ENCODE measurements at regions of chr19 and their contacts with region 1.

Region 1: GRCh38 chr19:45643024-45643926 is 4.1 kb upstream of the EML2 start:
- DNase-seq: peak; percentile 77 to 97 (median 90)
- ATAC-seq: peak; percentile 44 to 74 (median 54)
- H3K4me3 ChIP-seq: peak overlapping the region in 1 of 4 donors; percentile 47
- H3K27ac ChIP-seq: peak overlapping the region in 3 of 4 donors; percentile 62 to 85 (median 82)
- H3K4me1 ChIP-seq: peaks cover 5 to 19% (median 8%) of the 10 kb centered on the region in 3 donors
- H3K27me3 ChIP-seq: no peaks in the 10 kb centered on the region
- CTCF ChIP-seq: peak; percentile 93 to 96 (median 94)

Region 2: DNA sequence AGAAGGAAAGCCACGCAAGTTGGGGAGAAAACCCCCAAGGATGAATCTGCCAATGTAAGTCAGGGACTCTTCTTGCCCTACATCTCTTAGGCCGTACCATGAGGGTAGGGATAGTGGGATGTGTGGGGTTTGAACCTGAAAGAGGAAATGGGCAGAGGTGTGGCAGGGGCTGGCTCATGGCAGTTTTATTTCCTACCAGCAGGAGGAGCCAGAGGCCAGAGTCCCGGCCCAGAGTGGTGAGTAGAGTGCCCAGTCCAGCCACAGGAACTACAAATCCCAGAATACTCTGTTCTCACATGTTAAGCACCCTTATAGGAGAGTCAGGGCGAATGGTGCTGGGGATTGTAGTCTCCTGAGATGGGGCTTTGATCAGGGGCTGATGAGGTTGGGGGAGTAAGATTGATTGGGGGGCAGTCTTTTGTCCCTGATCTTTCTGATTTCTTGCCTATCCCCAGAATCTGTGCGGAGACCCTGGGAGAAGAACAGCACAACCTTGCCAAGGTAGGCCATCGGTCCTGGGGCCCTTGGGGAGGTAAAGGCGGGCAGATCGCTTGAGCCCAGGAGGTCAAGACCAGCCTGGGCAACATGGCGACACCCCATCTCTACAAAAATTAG is 119.5 kb before region 1 on chr19:
- intact Hi-C with region 1: loop called in 2 of 3 experiments (anchors 5 to 10 kb)
- DNase-seq: peak; percentile 73 to 89 (median 76)
- ATAC-seq: peak; percentile 83 to 92 (median 90)
- H3K4me3 ChIP-seq: no peak overlapping the region
- H3K27ac ChIP-seq: no peak overlapping the region
- H3K4me1 ChIP-seq: peaks cover 3 to 7% (median 3%) of the 10 kb centered on the region in 3 donors
- H3K27me3 ChIP-seq: no peaks in the 10 kb centered on the region
- CTCF ChIP-seq: peak; percentile 56 to 91 (median 78)

Region 3: GRCh38 chr19:45584332-45585157 is 58.7 kb before region 1 on chr19 and contains the start of gene OPA3:
- intact Hi-C with region 1: no loop called
- DNase-seq: peak; percentile 96 to 100 (median 100)
- ATAC-seq: peak; percentile 92 to 96 (median 93)
- H3K4me3 ChIP-seq: peak within 1 kb of the TSS; percentile 32 to 75 (median 59)
- H3K27ac ChIP-seq: peak within 1 kb of the TSS; percentile 91 to 97 (median 92)
- H3K4me1 ChIP-seq: peaks cover 0 to 7% (median 3%) of the 10 kb centered on the region in 3 donors
- H3K27me3 ChIP-seq: no peaks in the 10 kb centered on the region
- CTCF ChIP-seq: no peak
- total RNA-seq, gene OPA3: 3.4 to 8.0 (median 6.0) TPM

Region 4: DNA sequence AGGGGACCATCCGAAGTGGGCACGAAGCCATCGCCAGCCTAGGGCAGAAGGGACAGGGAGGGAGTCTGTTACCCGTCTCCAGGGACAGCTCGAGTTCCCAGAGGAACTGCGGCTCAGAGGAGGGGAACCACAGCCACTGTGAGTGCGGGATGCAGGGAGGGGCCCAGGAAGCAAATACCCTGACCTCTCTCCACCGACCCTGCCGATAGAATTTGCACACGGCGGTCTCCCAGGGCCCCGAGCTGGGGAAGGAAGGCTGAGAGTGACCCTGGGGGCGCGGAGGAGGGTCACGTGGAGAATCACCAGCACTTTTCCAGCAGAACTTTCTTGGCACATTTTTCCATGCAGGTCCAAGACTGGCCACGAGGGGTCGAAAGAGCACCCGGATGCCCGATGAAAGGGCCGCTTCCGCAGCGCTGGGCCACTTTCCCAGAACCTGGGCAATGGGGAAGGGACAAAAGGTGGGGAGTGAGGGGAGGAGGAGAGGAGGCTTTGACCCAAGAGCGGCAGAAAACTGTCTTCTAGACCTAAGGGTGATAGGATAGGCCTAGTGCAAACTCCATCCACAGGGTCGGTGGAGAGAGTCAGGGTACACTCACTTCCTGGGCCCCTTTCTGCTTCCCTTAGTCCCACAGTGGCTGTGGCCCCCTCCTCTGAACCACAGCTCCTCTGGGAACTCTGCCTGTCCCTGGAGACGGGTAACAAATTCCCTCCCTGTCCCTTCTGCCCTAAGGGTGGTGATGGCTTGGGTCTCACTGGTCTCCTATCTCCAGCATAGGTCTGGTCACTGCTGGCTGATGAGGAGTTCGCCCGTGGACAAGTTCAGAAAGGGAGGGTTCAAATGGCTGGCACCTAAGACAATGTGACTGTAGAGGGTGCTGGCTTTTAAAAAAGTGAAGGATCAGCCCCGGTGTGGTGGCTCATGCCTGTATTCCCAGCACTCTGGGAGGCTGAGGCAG is 35.9 kb before region 1 on chr19:
- intact Hi-C with region 1: loop called in 1 of 3 experiments (anchors 5 kb)
- DNase-seq: peak; percentile 68 to 91 (median 86)
- ATAC-seq: peak; percentile 88 to 98 (median 96)
- H3K4me3 ChIP-seq: peak overlapping the region in 1 of 4 donors; percentile 18
- H3K27ac ChIP-seq: no peak overlapping the region
- H3K4me1 ChIP-seq: no peaks in the 10 kb centered on the region
- H3K27me3 ChIP-seq: no peaks in the 10 kb centered on the region
- CTCF ChIP-seq: peak; percentile 71 to 85 (median 84)

Measured in pancreas (tissue), 10 donors.